ENCODE measurements at regions of chr14 and their contacts with region 1.

Region 1: DNA sequence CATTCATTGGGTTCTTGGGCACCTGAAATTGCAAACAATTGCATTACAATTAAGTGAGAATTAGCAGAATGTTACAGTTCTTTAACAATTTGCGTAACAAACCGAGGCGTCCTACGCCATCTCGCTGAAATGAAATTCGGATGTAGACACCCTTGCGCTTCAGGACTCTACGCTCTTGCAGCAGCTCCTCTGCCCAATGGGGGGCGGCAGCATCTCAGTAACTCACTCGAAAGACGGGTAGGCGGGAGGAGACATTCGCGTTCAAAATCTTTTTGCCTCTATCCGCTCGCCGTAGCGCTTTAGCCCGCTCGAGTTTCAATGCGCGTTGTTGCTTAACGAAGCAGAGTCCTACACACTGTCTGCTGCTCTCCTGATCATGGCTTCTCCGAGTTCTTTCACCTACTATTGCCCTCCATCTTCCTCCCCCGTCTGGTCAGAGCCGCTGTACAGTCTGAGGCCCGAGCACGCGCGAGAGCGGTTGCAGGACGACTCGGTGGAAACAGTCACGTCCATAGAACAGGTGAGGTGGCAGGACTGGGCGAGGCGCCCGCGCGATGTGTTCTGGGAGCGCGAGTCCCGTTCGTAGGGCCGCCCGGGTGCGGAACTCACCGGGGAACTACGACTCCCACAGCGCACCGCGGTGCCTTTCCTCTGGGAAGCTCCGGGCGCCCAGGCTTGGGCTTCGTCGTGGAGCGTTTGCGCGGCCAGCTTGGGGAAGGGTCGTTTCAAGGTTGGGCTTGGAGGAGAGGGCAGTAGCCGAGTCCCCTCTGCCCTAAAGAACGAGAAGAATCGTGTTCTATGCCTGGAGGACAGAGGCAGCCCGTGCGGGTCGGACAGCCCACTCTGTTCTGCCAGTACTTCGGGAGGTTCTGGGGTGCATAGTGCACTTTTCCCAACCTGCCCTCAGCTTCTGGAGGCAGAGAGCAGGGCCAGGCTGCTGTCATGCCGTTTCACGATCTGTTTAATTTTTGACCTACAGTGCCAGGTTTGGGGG is at the start of gene FNTB:
- DNase-seq: peak; percentile 95
- H3K4me3 Mint-ChIP-seq: peak within 1 kb of the TSS; percentile 98
- H3K27ac Mint-ChIP-seq: peak within 1 kb of the TSS; percentile 98
- H3K4me1 Mint-ChIP-seq: peaks cover 39% of the 10 kb centered on the region
- H3K27me3 Mint-ChIP-seq: no peaks in the 10 kb centered on the region
- total RNA-seq, gene FNTB: 8.8 to 12.3 TPM

Region 2: GRCh38 chr14:64671591-64671990 is 315.3 kb before region 1 on chr14:
- CTCF ChIA-PET with region 1: no interaction called
- POLR2A ChIA-PET with region 1: no interaction called
- intact Hi-C with region 1: loop called (anchors 10 kb)
- DNase-seq: no peak
- H3K4me3 Mint-ChIP-seq: no peak overlapping the region
- H3K27ac Mint-ChIP-seq: no peak overlapping the region
- H3K4me1 Mint-ChIP-seq: peaks cover 24% of the 10 kb centered on the region
- H3K27me3 Mint-ChIP-seq: no peaks in the 10 kb centered on the region

Region 3: GRCh38 chr14:64823305-64823861 is 163.5 kb before region 1 on chr14:
- CTCF ChIA-PET with region 1: interaction called, 26 read pairs
- POLR2A ChIA-PET with region 1: no interaction called
- intact Hi-C with region 1: loop called (anchors 1 kb)
- DNase-seq: peak; percentile 80
- H3K4me3 Mint-ChIP-seq: no peak overlapping the region
- H3K27ac Mint-ChIP-seq: no peak overlapping the region
- H3K4me1 Mint-ChIP-seq: no peaks in the 10 kb centered on the region
- H3K27me3 Mint-ChIP-seq: peaks cover 4% of the 10 kb centered on the region

Region 4: GRCh38 chr14:65003394-65003793 is 16.5 kb after region 1 on chr14:
- CTCF ChIA-PET with region 1: interaction called, 16 read pairs
- POLR2A ChIA-PET with region 1: interaction called, 17 read pairs
- intact Hi-C with region 1: loop called (anchors 2 kb)
- DNase-seq: no peak
- H3K4me3 Mint-ChIP-seq: no peak overlapping the region
- H3K27ac Mint-ChIP-seq: no peak overlapping the region
- H3K4me1 Mint-ChIP-seq: peaks cover 46% of the 10 kb centered on the region
- H3K27me3 Mint-ChIP-seq: no peaks in the 10 kb centered on the region

Region 5: GRCh38 chr14:65040666-65041433 is 54.0 kb after region 1 on chr14:
- CTCF ChIA-PET with region 1: no interaction called
- POLR2A ChIA-PET with region 1: no interaction called
- intact Hi-C with region 1: no loop called
- DNase-seq: no peak
- H3K4me3 Mint-ChIP-seq: no peak overlapping the region
- H3K27ac Mint-ChIP-seq: no peak overlapping the region
- H3K4me1 Mint-ChIP-seq: no peaks in the 10 kb centered on the region
- H3K27me3 Mint-ChIP-seq: no peaks in the 10 kb centered on the region

Region 6: GRCh38 chr14:65102441-65103149 is 115.7 kb after region 1 on chr14 and contains the start of gene MAX:
- CTCF ChIA-PET with region 1: interaction called, 6 read pairs
- POLR2A ChIA-PET with region 1: interaction called, 3 read pairs
- intact Hi-C with region 1: loop called (anchors 1 kb)
- DNase-seq: peak; percentile 99
- H3K4me3 Mint-ChIP-seq: peak within 1 kb of the TSS; percentile 96
- H3K27ac Mint-ChIP-seq: peak within 1 kb of the TSS; percentile 93
- H3K4me1 Mint-ChIP-seq: peaks cover 34% of the 10 kb centered on the region
- H3K27me3 Mint-ChIP-seq: no peaks in the 10 kb centered on the region
- total RNA-seq, gene MAX: 74.5 to 80.7 TPM

Region 7: GRCh38 chr14:65336191-65336591 is 349.3 kb after region 1 on chr14:
- CTCF ChIA-PET with region 1: no interaction called
- POLR2A ChIA-PET with region 1: no interaction called
- intact Hi-C with region 1: loop called (anchors 1 kb)
- DNase-seq: peak; percentile 73
- H3K4me3 Mint-ChIP-seq: peak overlapping the region; percentile 72
- H3K27ac Mint-ChIP-seq: peak overlapping the region; percentile 90
- H3K4me1 Mint-ChIP-seq: peaks cover 44% of the 10 kb centered on the region
- H3K27me3 Mint-ChIP-seq: no peaks in the 10 kb centered on the region

Region 8: DNA sequence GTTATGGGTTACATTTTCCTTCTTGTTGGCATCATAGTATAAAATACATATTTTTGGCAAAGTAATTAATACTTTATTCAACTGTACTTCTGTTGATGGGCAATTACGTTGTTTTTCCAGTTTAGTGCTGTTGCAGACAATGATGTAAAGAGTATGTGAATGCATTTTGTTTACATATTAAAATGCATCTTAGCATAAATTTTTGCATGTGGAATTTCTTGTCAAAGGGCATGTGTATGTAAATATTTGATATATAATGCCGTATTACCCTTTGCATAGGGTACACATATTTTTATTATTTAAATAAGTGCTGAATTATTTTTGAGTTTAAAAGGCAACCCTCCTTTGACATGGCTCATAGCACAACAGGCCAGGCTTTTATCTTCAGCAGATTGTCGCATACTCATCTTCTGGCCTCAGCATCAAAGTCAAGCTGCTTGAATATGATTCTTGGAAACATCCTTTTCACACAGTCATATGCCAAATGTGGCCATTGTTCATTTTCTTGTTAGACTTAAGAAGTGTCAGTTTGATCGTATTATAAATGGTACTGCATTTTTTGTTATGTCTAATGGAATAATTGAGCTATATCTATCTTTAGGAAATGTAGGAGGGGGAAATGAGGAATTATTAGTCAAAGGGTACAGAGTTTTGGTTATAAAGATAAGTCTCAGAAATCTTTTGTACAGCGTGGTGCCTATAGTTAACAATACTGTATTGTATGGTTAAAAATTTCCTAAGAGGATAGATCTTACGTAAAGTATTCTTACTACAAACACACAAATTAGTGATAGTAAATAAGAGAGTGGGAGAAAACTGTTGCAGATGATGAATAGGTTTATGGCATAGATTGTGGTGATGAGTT is 564.1 kb after region 1 on chr14:
- CTCF ChIA-PET with region 1: no interaction called
- POLR2A ChIA-PET with region 1: no interaction called
- intact Hi-C with region 1: no loop called
- DNase-seq: no peak
- H3K4me3 Mint-ChIP-seq: no peak overlapping the region
- H3K27ac Mint-ChIP-seq: peak overlapping the region; percentile 52
- H3K4me1 Mint-ChIP-seq: peaks cover 20% of the 10 kb centered on the region
- H3K27me3 Mint-ChIP-seq: no peaks in the 10 kb centered on the region